ENCODE measurements at regions of chr7 and their contacts with region 1.

Region 1: GRCh38 chr7:105304040-105304895 is 84.5 kb downstream of the SRPK2 start:
- DNase-seq: peak; percentile 91
- ATAC-seq: peak; percentile 94
- H3K4me3 ChIP-seq: peak overlapping the region; percentile 13 to 43 (median 41); a peak in 5 of 6 replicates
- H3K27ac ChIP-seq: peak overlapping the region; percentile 69
- H3K4me1 ChIP-seq: peaks cover 34% of the 10 kb centered on the region
- H3K27me3 ChIP-seq: no peaks in the 10 kb centered on the region
- CTCF ChIP-seq: no peak
- EP300 ChIP-seq: peak in 1 of 2 experiments; percentile 56; a peak in 1 of 4 replicates
- POLR2A ChIP-seq: no peak
- RAD21 ChIP-seq: no peak

Region 2: DNA sequence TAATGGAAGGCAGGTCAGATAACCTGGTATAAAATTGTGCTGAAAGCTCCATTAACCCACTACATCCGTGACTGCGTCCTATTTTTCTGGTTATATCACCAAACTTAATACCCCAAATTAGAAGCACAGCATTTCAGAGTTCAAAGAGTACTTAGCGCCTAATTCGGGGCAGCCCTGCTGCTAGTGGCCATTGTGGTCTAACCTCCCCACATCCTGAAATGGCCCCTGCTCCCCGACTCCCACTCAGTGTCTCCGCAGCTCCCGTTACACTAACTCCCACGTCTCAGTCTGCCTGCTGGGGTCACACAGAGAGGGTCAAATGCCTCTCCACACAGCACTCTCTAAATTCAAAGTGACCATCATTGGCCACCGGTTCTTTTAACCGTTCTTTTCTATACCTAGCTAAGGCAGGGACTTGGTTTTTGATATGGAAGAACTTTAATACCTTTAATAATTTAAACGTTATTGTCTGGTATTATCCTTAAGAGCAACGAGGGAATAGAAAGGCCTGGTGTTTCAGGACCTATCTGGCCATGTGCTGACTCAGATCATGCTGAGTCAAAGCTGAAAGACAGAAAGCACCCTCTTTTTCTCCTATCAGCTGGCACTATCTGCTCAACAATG is 173.1 kb before region 1 on chr7:
- CTCF ChIA-PET with region 1: no interaction called
- POLR2A ChIA-PET with region 1: no interaction called
- in situ Hi-C with region 1: no loop called
- intact Hi-C with region 1: no loop called
- DNase-seq: no peak
- ATAC-seq: no peak
- H3K4me3 ChIP-seq: no peak overlapping the region
- H3K27ac ChIP-seq: no peak overlapping the region
- H3K4me1 ChIP-seq: no peaks in the 10 kb centered on the region
- H3K27me3 ChIP-seq: no peaks in the 10 kb centered on the region
- CTCF ChIP-seq: no peak
- EP300 ChIP-seq: no peak
- POLR2A ChIP-seq: no peak
- RAD21 ChIP-seq: no peak

Region 3: DNA sequence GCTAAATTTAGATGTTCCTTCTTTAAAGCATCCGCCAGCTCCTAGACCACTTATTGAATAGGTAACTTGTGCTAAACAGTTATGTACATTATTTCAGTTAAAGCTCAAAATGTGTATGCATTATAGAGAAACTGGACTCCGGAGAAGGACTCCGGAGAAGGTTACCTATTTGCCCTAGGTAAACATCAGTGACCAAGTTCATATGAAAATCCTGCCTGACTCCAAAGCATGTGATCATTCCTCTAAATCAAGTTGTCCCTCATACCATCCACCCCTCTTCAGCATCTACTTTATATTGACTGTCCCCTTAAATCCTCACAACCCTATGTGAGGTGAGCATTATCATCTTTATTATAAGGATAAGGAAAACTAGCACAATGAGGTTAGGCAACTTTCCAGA is 63.1 kb before region 1 on chr7:
- CTCF ChIA-PET with region 1: no interaction called
- POLR2A ChIA-PET with region 1: no interaction called
- in situ Hi-C with region 1: no loop called
- intact Hi-C with region 1: loop called (anchors 1 kb)
- DNase-seq: no peak
- ATAC-seq: no peak
- H3K4me3 ChIP-seq: no peak overlapping the region
- H3K27ac ChIP-seq: no peak overlapping the region
- H3K4me1 ChIP-seq: peaks cover 31% of the 10 kb centered on the region
- H3K27me3 ChIP-seq: no peaks in the 10 kb centered on the region
- CTCF ChIP-seq: no peak
- EP300 ChIP-seq: no peak
- POLR2A ChIP-seq: no peak
- RAD21 ChIP-seq: no peak

Region 4: DNA sequence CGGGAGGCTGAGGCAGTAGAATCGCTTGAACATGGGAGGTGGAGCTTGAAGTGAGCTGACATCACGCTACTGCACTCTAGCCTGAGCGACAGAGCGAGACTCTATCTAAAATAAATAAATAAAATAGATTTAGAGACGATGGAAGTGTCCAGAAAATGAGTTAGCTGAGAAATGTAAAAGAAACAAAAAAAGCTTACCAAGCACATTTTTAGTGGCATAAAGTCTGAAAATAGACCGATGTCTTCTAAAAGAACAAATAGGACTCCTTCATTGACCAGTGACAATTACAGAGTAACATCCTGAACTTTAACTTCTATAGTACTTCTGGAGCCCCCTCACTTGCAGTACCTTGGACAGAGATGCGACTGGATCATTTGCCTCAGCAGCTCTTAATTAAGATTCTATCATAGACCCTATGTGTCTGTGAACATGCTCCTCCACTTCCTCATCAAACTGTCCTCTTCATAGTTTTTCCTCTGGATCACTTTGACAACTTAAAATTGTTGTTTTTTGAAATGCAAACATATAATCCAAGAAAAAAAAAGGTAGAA is 109.7 kb after region 1 on chr7:
- CTCF ChIA-PET with region 1: no interaction called
- POLR2A ChIA-PET with region 1: no interaction called
- in situ Hi-C with region 1: no loop called
- intact Hi-C with region 1: no loop called
- DNase-seq: no peak
- ATAC-seq: no peak
- H3K4me3 ChIP-seq: no peak overlapping the region
- H3K27ac ChIP-seq: no peak overlapping the region
- H3K4me1 ChIP-seq: peaks cover 1% of the 10 kb centered on the region; the same call in 1 of the 2 replicates
- H3K27me3 ChIP-seq: no peaks in the 10 kb centered on the region
- CTCF ChIP-seq: no peak
- EP300 ChIP-seq: no peak
- POLR2A ChIP-seq: no peak
- RAD21 ChIP-seq: no peak